ENCODE measurements at regions of chr1 and their contacts with region 1.

Region 1: DNA sequence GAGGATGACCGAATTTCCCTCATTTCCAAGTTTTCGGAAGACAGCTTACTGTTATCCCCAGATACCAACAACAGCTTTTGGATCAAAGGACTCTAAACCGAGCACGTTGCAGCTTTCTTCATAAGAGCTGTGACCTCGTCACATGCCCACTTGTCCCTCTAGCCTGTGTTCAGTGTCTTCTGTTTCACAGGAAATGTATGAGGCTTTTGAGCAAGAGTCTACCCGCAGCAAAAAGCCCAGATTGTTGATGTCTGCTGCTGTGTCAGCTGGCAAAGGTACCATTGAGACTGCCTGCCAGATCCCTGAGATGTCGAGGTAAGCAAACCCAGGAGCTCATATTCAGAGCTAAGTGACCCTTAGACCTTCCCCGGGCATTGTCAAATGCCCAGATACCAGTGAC is 24.1 kb downstream of the CHI3L2 start:
- DNase-seq: no peak
- ATAC-seq: no peak
- H3K4me3 ChIP-seq: no peak overlapping the region
- H3K27ac ChIP-seq: no peak overlapping the region
- H3K4me1 ChIP-seq: no peaks in the 10 kb centered on the region
- H3K27me3 ChIP-seq: peaks cover 20% of the 10 kb centered on the region
- CTCF ChIP-seq: no peak
- POLR2A ChIP-seq: no peak
- RAD21 ChIP-seq: no peak

Region 2: DNA sequence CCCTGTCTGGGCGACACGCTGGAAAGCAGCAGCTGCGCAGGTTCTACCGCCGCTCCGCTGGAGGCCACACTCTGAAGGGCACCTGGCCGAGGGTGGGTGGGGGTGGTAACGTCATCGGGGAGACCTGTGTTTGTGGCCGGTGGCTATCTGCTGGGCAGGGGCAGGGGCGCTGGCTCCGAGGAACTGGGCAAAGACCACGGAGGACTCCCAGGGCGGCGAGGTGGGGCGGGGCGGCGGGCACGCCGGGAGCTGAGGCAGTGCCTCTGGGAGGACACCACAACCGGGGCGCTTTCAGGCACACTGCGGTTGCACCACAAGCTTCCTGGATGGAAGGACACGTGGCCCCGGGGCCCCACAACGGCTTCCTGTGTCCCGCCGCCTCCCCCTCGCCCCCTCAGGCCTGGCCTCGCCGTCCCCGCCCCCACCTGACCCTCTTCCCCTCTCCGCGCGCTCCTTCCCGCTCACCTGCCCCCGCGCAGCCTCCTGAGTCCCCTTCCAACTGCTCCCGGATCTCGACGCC is 47.8 kb before region 1 on chr1:
- CTCF ChIA-PET with region 1: no interaction called
- POLR2A ChIA-PET with region 1: no interaction called
- dilution Hi-C with region 1: no loop called
- in situ Hi-C with region 1: no loop called
- intact Hi-C with region 1: no loop called
- DNase-seq: no peak
- ATAC-seq: peak; percentile 58
- H3K4me3 ChIP-seq: peak overlapping the region; percentile 42
- H3K27ac ChIP-seq: no peak overlapping the region
- H3K4me1 ChIP-seq: peaks cover 16% of the 10 kb centered on the region
- H3K27me3 ChIP-seq: peaks cover 17% of the 10 kb centered on the region
- CTCF ChIP-seq: no peak
- POLR2A ChIP-seq: no peak
- RAD21 ChIP-seq: no peak

Region 3: GRCh38 chr1:112026018-112026417 is 774.4 kb after region 1 on chr1:
- CTCF ChIA-PET with region 1: no interaction called
- POLR2A ChIA-PET with region 1: no interaction called
- dilution Hi-C with region 1: no loop called
- in situ Hi-C with region 1: no loop called
- intact Hi-C with region 1: loop called (anchors 10 kb)
- DNase-seq: no peak
- ATAC-seq: no peak
- H3K4me3 ChIP-seq: no peak overlapping the region
- H3K27ac ChIP-seq: no peak overlapping the region
- H3K4me1 ChIP-seq: no peaks in the 10 kb centered on the region
- H3K27me3 ChIP-seq: peaks cover 2% of the 10 kb centered on the region; the same call in 1 of the 2 replicates
- CTCF ChIP-seq: no peak
- POLR2A ChIP-seq: no peak
- RAD21 ChIP-seq: no peak

Measured in IMR-90 (cell line).